Heart right ventricle (tissue), 16 donors: ENCODE measurements at regions of chr2 and their contacts with region 1.

Region 1: DNA sequence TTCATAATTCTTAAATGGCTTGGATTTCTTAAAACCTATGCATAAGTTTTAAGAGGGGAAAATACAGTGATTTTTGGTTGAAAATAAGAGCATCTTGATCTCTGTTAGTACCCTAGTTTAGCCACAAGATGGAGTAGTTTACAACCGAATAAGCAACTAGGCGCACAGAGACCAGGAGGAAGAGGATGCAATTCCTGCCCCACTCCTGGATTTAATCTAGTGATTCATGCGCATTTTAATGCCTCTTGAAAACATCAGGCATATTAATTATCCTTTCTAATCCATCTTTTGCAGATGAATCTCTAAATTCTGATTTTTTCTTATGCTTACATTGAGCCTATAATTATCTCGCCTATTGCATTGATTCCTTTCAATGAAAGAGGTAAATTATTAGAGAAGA is 76.7 kb downstream of the MRPS9 start:
- DNase-seq: no peak
- ATAC-seq: peak in 2 of 8 donors; percentile 56 to 59
- H3K4me3 ChIP-seq: no peak overlapping the region
- H3K27ac ChIP-seq: no peak overlapping the region
- H3K4me1 ChIP-seq: peaks cover 0 to 4% (median 0%) of the 10 kb centered on the region in 9 donors
- H3K27me3 ChIP-seq: peaks cover 0 to 7% (median 0%) of the 10 kb centered on the region in 7 donors
- CTCF ChIP-seq: peak; percentile 57 to 80 (median 74)

Region 2: GRCh38 chr2:105235388-105236054 is 121.0 kb after region 1 on chr2:
- intact Hi-C with region 1: loop called (anchors 1 to 5 kb)
- DNase-seq: peak; percentile 63 to 67
- ATAC-seq: peak; percentile 39 to 82 (median 72)
- H3K4me3 ChIP-seq: no peak overlapping the region
- H3K27ac ChIP-seq: no peak overlapping the region
- H3K4me1 ChIP-seq: peaks cover 0 to 17% (median 0%) of the 10 kb centered on the region in 9 donors
- H3K27me3 ChIP-seq: peaks cover 0 to 18% (median 11%) of the 10 kb centered on the region in 7 donors
- CTCF ChIP-seq: peak; percentile 38 to 79 (median 75)

Region 3: GRCh38 chr2:105294844-105295481 is 180.4 kb after region 1 on chr2:
- intact Hi-C with region 1: loop called in 2 of 10 experiments (anchors 2 to 5 kb)
- DNase-seq: peak; percentile 18 to 42
- ATAC-seq: peak in 7 of 8 donors; percentile 33 to 77 (median 60)
- H3K4me3 ChIP-seq: no peak overlapping the region
- H3K27ac ChIP-seq: no peak overlapping the region
- H3K4me1 ChIP-seq: peaks cover 0 to 4% (median 0%) of the 10 kb centered on the region in 9 donors
- H3K27me3 ChIP-seq: no peaks in the 10 kb centered on the region
- CTCF ChIP-seq: peak; percentile 10 to 60 (median 50)